ENCODE measurements at regions of chr16 and their contacts with region 1.

Region 1: GRCh38 chr16:569445-570254 is at the start of gene PIGQ:
- DNase-seq: peak; percentile 47 to 80 (median 62)
- ATAC-seq: peak; percentile 79
- H3K4me3 ChIP-seq: peak within 1 kb of the TSS; percentile 58
- H3K4me3 Mint-ChIP-seq: peak within 1 kb of the TSS; percentile 76 to 90 (median 85)
- H3K27ac ChIP-seq: peak within 1 kb of the TSS; percentile 89
- H3K27ac Mint-ChIP-seq: peak within 1 kb of the TSS; percentile 81 to 96 (median 89)
- H3K4me1 ChIP-seq: peaks cover 13 to 32% of the 10 kb centered on the region in 2 donors
- H3K4me1 Mint-ChIP-seq: peaks cover 15 to 39% (median 28%) of the 10 kb centered on the region in 7 donors
- H3K27me3 ChIP-seq: no peaks in the 10 kb centered on the region
- H3K27me3 Mint-ChIP-seq: no peaks in the 10 kb centered on the region
- total RNA-seq, gene PIGQ: 27.1 to 63.0 (median 45.1) TPM

Region 2: GRCh38 chr16:527006-527753 is 42.5 kb before region 1 on chr16 and contains the start of gene CAPN15:
- CTCF ChIA-PET with region 1: no interaction called
- POLR2A ChIA-PET with region 1: interaction called, 5 read pairs
- intact Hi-C with region 1: loop called (anchors 1 to 2 kb)
- DNase-seq: peak; percentile 79 to 93 (median 89)
- ATAC-seq: peak; percentile 91
- H3K4me3 ChIP-seq: peak within 1 kb of the TSS; percentile 78
- H3K4me3 Mint-ChIP-seq: peak within 1 kb of the TSS; percentile 83 to 93 (median 88)
- H3K27ac ChIP-seq: peak within 1 kb of the TSS; percentile 97
- H3K27ac Mint-ChIP-seq: peak within 1 kb of the TSS; percentile 68 to 93 (median 83)
- H3K4me1 ChIP-seq: peaks cover 26 to 28% of the 10 kb centered on the region in 2 donors
- H3K4me1 Mint-ChIP-seq: peaks cover 21 to 38% (median 30%) of the 10 kb centered on the region in 7 donors
- H3K27me3 ChIP-seq: no peaks in the 10 kb centered on the region
- H3K27me3 Mint-ChIP-seq: no peaks in the 10 kb centered on the region
- total RNA-seq, gene CAPN15: 51.0 to 89.8 (median 55.6) TPM

Region 3: DNA sequence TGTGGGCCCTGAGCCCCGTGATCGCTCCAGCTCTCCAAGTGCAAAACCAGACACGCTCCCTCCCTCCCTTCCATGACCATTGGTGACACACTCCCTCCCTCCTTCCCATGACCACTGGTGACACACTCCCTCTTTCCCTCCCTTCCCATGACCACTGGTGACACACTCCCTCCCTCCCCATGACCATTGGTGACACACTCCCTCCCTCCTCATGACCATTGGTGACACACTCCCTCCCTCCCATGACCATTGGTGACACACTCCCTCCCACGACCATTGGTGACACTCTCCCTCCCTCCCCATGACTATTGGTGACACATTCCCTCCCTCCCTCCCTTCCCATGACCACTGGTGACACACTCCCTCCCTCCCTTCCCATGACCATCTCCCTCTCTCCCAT is 344.8 kb after region 1 on chr16:
- CTCF ChIA-PET with region 1: no interaction called
- POLR2A ChIA-PET with region 1: no interaction called
- intact Hi-C with region 1: no loop called
- DNase-seq: no peak
- ATAC-seq: peak; percentile 52
- H3K4me3 ChIP-seq: no peak overlapping the region
- H3K4me3 Mint-ChIP-seq: no peak overlapping the region
- H3K27ac ChIP-seq: no peak overlapping the region
- H3K27ac Mint-ChIP-seq: no peak overlapping the region
- H3K4me1 ChIP-seq: no peaks in the 10 kb centered on the region
- H3K4me1 Mint-ChIP-seq: no peaks in the 10 kb centered on the region
- H3K27me3 ChIP-seq: no peaks in the 10 kb centered on the region
- H3K27me3 Mint-ChIP-seq: no peaks in the 10 kb centered on the region

Measured in naive thymus-derived CD4-positive, alpha-beta T cell (primary cell).